ENCODE measurements at regions of chr17 and their contacts with region 1.

Region 1: GRCh38 chr17:38702166-38702899 is 2.7 kb upstream of the MLLT6 start:
- DNase-seq: peak; percentile 86
- ATAC-seq: peak; percentile 6
- H3K4me3 Mint-ChIP-seq: peak overlapping the region; percentile 90
- H3K27ac Mint-ChIP-seq: peak overlapping the region; percentile 98
- H3K4me1 Mint-ChIP-seq: peaks cover 38% of the 10 kb centered on the region
- H3K27me3 Mint-ChIP-seq: no peaks in the 10 kb centered on the region
- CTCF ChIP-seq: no peak

Region 2: DNA sequence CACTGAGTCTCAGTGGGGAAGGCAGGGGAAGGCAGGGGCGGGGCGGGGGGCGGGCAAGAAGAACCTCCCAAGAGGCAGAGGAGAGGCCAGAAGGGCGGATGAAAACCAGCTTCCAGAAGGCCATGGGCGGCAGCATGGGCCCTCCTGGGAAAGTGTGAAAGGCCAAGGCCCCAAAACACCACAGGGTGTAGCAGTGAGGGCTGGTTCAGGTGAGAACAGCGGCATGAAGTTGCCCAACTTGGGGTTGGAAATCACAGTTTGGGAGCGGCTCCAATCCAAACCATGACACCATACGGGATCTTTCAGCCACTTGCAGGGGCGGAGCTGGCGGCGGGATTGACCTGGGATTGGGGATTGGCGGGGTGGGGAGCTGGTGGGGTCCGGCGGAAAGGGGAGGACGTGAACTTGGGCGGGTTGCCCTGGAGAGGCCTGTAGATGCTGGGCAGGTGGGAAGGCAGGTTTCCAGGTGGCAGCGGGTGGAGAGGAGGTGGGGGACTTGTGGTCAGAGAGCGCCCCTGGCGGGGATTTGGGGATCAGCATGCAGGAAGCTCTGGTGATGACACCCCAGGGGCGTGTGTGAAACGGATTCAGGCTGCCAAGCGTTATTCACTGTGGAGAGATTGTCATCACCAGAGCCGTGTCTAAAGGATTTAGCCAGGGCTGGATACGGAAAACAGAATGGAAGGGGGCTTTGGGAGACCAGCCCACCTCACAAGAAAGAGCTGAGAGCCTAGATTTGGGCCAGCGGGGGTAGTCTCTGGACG is 193.1 kb before region 1 on chr17:
- CTCF ChIA-PET with region 1: no interaction called
- POLR2A ChIA-PET with region 1: no interaction called
- intact Hi-C with region 1: no loop called
- DNase-seq: peak; percentile 92
- ATAC-seq: peak; percentile 97
- H3K4me3 Mint-ChIP-seq: peak overlapping the region; percentile 69
- H3K27ac Mint-ChIP-seq: no peak overlapping the region
- H3K4me1 Mint-ChIP-seq: peaks cover 10% of the 10 kb centered on the region
- H3K27me3 Mint-ChIP-seq: peaks cover 30% of the 10 kb centered on the region
- CTCF ChIP-seq: peak; percentile 73

Region 3: DNA sequence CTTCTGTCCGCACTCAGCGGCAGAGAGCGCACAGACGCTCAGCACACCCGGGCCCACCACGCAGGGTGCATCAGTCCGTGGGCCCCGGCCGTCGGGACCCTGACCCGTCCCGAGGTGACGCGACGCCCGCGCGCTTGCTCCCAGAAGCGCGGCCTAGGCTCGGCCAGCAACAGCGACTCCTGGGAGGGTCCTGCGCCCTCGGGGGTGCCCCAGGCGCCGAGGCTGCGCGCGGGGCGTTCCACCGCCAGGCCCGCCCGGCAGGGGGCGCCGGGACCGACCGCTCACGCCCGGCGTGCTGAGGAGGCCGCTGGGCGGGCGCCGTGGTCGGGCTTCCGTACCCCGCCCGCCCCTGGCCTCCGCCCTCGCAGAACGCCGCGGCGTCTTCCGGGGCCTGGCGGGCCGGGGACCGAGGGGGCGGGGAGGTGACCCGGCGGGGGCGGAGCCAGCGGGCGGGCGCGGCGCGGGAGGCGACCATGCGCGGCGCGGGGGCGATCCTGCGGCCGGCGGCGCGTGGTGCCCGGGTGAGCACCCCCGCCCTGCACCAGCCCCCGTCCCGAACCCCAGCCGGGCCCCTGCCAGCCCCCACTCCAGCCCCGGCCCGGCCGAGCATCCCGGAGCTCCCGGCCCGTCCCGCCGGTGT is 27.7 kb after region 1 on chr17 and contains the start of gene CISD3:
- CTCF ChIA-PET with region 1: interaction called, 20 read pairs
- POLR2A ChIA-PET with region 1: interaction called, 390 read pairs
- intact Hi-C with region 1: loop called (anchors 5 kb)
- DNase-seq: peak; percentile 86
- ATAC-seq: peak; percentile 70
- H3K4me3 Mint-ChIP-seq: peak within 1 kb of the TSS; percentile 89
- H3K27ac Mint-ChIP-seq: peak within 1 kb of the TSS; percentile 99
- H3K4me1 Mint-ChIP-seq: peaks cover 80% of the 10 kb centered on the region
- H3K27me3 Mint-ChIP-seq: no peaks in the 10 kb centered on the region
- CTCF ChIP-seq: peak; percentile 59
- total RNA-seq, gene CISD3: 43.2 to 44.2 TPM

Region 4: GRCh38 chr17:38752119-38752929 is 50.0 kb after region 1 on chr17 and contains the start of gene PSMB3:
- CTCF ChIA-PET with region 1: no interaction called
- POLR2A ChIA-PET with region 1: interaction called, 10 read pairs
- intact Hi-C with region 1: no loop called
- DNase-seq: peak; percentile 100
- ATAC-seq: peak; percentile 89
- H3K4me3 Mint-ChIP-seq: peak within 1 kb of the TSS; percentile 91
- H3K27ac Mint-ChIP-seq: peak within 1 kb of the TSS; percentile 96
- H3K4me1 Mint-ChIP-seq: peaks cover 39% of the 10 kb centered on the region
- H3K27me3 Mint-ChIP-seq: peaks cover 26% of the 10 kb centered on the region
- CTCF ChIP-seq: no peak
- total RNA-seq, gene PSMB3: 275 to 279 TPM

Region 5: GRCh38 chr17:38824899-38825761 is 122.8 kb after region 1 on chr17 and contains the start of gene CWC25:
- CTCF ChIA-PET with region 1: no interaction called
- POLR2A ChIA-PET with region 1: no interaction called
- intact Hi-C with region 1: no loop called
- DNase-seq: peak; percentile 95
- ATAC-seq: peak; percentile 85
- H3K4me3 Mint-ChIP-seq: peak within 1 kb of the TSS; percentile 93
- H3K27ac Mint-ChIP-seq: peak within 1 kb of the TSS; percentile 100
- H3K4me1 Mint-ChIP-seq: peaks cover 32% of the 10 kb centered on the region
- H3K27me3 Mint-ChIP-seq: no peaks in the 10 kb centered on the region
- CTCF ChIP-seq: no peak
- total RNA-seq, gene CWC25: 19.7 to 20.1 TPM